IMR-90 (cell line): ENCODE measurements at regions of chr12 and their contacts with region 1.

Region 1: GRCh38 chr12:53180220-53180930 is at the starts of genes CSAD and ZNF740:
- DNase-seq: peak; percentile 97
- ATAC-seq: peak; percentile 95
- H3K4me3 ChIP-seq: peak within 1 kb of the TSS; percentile 75
- H3K27ac ChIP-seq: peak within 1 kb of the TSS; percentile 89
- H3K4me1 ChIP-seq: peaks cover 17% of the 10 kb centered on the region
- H3K27me3 ChIP-seq: no peaks in the 10 kb centered on the region
- CTCF ChIP-seq: no peak
- POLR2A ChIP-seq: peak; percentile 65; the same call in 1 of the 2 replicates
- RAD21 ChIP-seq: no peak
- total RNA-seq, gene CSAD: 5.0 and 5.4 TPM in 2 replicates
- total RNA-seq, gene ZNF740: 11.7 and 13.1 TPM in 2 replicates

Region 2: DNA sequence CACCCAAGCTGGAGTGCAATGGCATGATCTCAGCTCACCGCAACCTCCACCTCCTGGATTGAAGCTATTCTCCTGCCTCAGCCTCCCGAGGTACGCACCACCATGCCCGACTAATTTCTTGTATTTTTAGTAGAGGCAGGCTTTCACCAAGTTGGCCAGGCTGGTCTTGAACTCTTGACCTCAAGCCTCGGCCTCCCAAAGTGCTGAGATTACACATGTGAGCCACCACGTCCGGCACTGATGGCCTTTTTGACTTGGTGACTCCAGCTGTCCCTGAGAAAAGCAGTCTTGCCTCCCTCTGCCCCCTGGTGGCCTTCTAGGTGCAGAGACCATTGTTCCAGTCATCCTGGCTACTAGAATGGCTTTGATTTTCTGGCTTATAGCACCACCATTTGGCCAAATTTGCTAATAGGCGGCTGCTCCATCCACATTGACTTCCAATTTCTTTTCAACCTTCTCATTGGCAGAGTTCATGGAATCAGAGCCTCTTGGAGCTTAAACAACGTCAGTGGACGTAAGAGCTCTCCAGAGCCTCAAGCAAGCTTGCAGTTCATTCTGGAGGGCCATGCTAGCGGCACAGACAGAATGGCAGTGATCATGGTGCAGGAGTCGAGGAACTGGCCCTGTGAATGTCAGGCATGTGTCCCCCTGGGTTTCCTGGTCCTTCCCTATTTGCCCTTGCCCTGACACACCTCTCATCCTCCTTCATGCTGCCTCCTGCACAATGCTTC is 199.5 kb before region 1 on chr12:
- CTCF ChIA-PET with region 1: no interaction called
- POLR2A ChIA-PET with region 1: no interaction called
- dilution Hi-C with region 1: no loop called
- in situ Hi-C with region 1: no loop called
- intact Hi-C with region 1: no loop called
- DNase-seq: peak; percentile 88
- ATAC-seq: peak; percentile 83
- H3K4me3 ChIP-seq: no peak overlapping the region
- H3K27ac ChIP-seq: no peak overlapping the region
- H3K4me1 ChIP-seq: peaks cover 9% of the 10 kb centered on the region
- H3K27me3 ChIP-seq: peaks cover 5% of the 10 kb centered on the region
- CTCF ChIP-seq: peak; percentile 100; the same call in 1 of the 2 replicates
- POLR2A ChIP-seq: peak; percentile 53; the same call in 1 of the 2 replicates
- RAD21 ChIP-seq: peak; percentile 100

Region 3: DNA sequence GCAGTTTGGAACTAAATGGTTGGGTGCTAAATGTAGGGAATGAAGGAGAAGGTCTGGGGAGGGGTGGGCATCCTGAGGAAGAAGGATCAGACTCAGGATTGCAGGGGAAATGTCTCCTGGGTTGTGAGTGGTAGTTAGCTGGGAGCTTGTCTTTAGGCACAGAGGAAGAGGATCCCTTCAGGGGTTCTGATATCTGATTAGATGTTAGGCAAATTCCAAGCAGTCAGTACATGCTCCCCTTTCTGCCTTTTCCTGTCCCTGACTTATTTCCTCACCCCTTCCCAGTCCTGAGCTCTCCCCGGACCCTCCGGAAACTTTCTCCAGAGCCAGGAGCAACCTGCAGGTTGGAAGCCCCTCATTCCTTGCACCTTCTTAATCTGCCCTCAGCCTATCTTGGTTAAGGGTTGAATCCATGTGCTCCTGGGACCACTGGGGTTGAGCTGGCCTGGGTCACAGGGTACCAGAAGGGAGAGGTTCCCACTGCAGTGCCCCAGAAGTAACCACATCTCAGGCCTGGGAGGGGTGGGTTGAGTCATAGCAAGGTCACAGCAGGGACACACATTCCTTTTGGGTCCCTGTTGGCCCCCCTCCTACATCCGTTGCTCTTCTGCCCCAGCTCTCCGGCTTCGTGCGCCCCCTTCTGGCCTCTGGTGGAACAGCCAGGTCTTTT is 81.3 kb before region 1 on chr12:
- CTCF ChIA-PET with region 1: no interaction called
- POLR2A ChIA-PET with region 1: no interaction called
- dilution Hi-C with region 1: no loop called
- in situ Hi-C with region 1: no loop called
- intact Hi-C with region 1: loop called (anchors 2 kb)
- DNase-seq: peak; percentile 95
- ATAC-seq: peak; percentile 66
- H3K4me3 ChIP-seq: peak overlapping the region; percentile 60
- H3K27ac ChIP-seq: peak overlapping the region; percentile 94
- H3K4me1 ChIP-seq: peaks cover 31% of the 10 kb centered on the region
- H3K27me3 ChIP-seq: no peaks in the 10 kb centered on the region
- CTCF ChIP-seq: peak; percentile 97
- POLR2A ChIP-seq: 0 out of 2 replicates have a peak, but pooled peaks have one; percentile 41
- RAD21 ChIP-seq: peak; percentile 93

Region 4: GRCh38 chr12:53198486-53199110 is 18.2 kb after region 1 on chr12:
- CTCF ChIA-PET with region 1: interaction called, 10 read pairs
- POLR2A ChIA-PET with region 1: no interaction called
- dilution Hi-C with region 1: no loop called
- in situ Hi-C with region 1: no loop called
- intact Hi-C with region 1: no loop called
- DNase-seq: no peak
- ATAC-seq: no peak
- H3K4me3 ChIP-seq: no peak overlapping the region
- H3K27ac ChIP-seq: no peak overlapping the region
- H3K4me1 ChIP-seq: no peaks in the 10 kb centered on the region
- H3K27me3 ChIP-seq: peaks cover 2% of the 10 kb centered on the region; the same call in 1 of the 2 replicates
- CTCF ChIP-seq: no peak
- POLR2A ChIP-seq: no peak
- RAD21 ChIP-seq: no peak